HEK293 (cell line): ENCODE measurements at regions of chr1 and their contacts with region 1.

Region 1: GRCh38 chr1:94335950-94336349 is 82.2 kb upstream of the ABCD3 start:
- H3K4me3 ChIP-seq: no peak overlapping the region
- H3K27ac ChIP-seq: no peak overlapping the region
- H3K4me1 ChIP-seq: no peaks in the 10 kb centered on the region
- CTCF ChIP-seq: peak; percentile 78

Region 2: GRCh38 chr1:94025383-94026340 is 310.3 kb before region 1 on chr1:
- CTCF ChIA-PET with region 1: interaction called, 197 read pairs
- POLR2A ChIA-PET with region 1: no interaction called
- H3K4me3 ChIP-seq: no peak overlapping the region
- H3K27ac ChIP-seq: no peak overlapping the region
- H3K4me1 ChIP-seq: no peaks in the 10 kb centered on the region
- CTCF ChIP-seq: peak; percentile 78

Region 3: GRCh38 chr1:94068999-94069918 is 266.7 kb before region 1 on chr1:
- CTCF ChIA-PET with region 1: interaction called, 389 read pairs
- POLR2A ChIA-PET with region 1: no interaction called
- H3K4me3 ChIP-seq: no peak overlapping the region
- H3K27ac ChIP-seq: peak overlapping the region; percentile 37
- H3K4me1 ChIP-seq: peaks cover 17% of the 10 kb centered on the region
- CTCF ChIP-seq: no peak

Region 4: GRCh38 chr1:94237291-94238226 is 98.4 kb before region 1 on chr1 and contains the start of gene ARHGAP29:
- CTCF ChIA-PET with region 1: interaction called, 35 read pairs
- POLR2A ChIA-PET with region 1: interaction called, 4 read pairs
- H3K4me3 ChIP-seq: peak within 1 kb of the TSS; percentile 92
- H3K27ac ChIP-seq: peak within 1 kb of the TSS; percentile 81
- H3K4me1 ChIP-seq: peaks cover 9% of the 10 kb centered on the region
- CTCF ChIP-seq: peak; percentile 80; the same call in 1 of the 2 replicates

Region 5: DNA sequence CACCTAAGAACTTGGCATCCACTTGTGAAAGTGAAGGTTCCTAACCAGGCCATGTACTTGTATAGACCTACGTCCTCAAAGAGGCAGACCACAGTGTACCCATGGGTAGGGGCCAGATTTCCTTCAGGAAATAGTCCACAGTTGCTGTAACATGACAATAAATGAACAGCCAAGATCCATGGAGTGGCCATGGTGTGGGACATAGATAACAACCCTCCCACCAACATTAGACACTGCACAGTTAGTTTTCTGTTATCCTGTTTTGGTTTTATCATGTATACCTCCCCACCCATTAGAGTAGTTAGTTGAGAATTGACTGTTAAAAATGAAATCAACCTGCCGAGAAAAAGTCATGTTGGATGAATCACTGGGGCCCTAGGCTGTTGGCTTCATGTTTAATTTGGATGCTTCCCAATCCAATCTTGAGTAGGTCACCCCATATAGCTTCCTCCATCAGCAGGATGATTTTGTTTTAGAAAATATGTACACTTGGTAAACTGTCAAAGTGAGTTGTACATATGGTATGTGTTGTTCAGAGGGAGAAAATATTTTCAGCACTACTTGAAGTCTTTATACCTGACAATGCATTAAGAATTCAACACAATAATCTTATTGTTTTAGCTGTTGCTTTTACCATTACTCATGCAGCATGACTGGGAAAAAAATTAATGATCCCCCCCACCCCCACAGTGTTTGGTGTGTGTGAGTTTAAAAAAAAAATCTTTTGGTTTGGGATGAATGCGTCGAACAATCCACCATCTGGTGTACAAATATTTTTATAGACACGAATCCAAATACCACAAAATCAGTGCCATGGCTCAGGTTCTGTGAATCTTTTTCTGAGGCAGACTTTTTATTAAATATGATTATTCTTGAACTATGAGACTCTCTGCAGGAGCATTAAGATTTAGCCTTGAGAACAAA is 10.3 kb before region 1 on chr1:
- CTCF ChIA-PET with region 1: interaction called, 34 read pairs
- POLR2A ChIA-PET with region 1: no interaction called
- H3K4me3 ChIP-seq: no peak overlapping the region
- H3K27ac ChIP-seq: peak overlapping the region; percentile 68
- H3K4me1 ChIP-seq: peaks cover 31% of the 10 kb centered on the region
- CTCF ChIP-seq: no peak